Body of pancreas (tissue), 4 donors: ENCODE measurements at regions of chr12 and their contacts with region 1.

Region 1: GRCh38 chr12:2034633-2035430 is 18.0 kb upstream of the CACNA1C start:
- DNase-seq: peak; percentile 87 to 92 (median 88)
- ATAC-seq: peak; percentile 96
- H3K4me3 ChIP-seq: no peak overlapping the region
- H3K27ac ChIP-seq: no peak overlapping the region
- H3K4me1 ChIP-seq: peaks cover 9% of the 10 kb centered on the region
- H3K27me3 ChIP-seq: no peaks in the 10 kb centered on the region
- CTCF ChIP-seq: peak; percentile 71 to 97 (median 94)
- POLR2A ChIP-seq: no peak

Region 2: GRCh38 chr12:1804545-1805332 is 230.1 kb before region 1 on chr12:
- intact Hi-C with region 1: loop called (anchors 10 kb)
- DNase-seq: peak; percentile 69 to 87 (median 74)
- ATAC-seq: peak; percentile 69
- H3K4me3 ChIP-seq: no peak overlapping the region
- H3K27ac ChIP-seq: no peak overlapping the region
- H3K4me1 ChIP-seq: no peaks in the 10 kb centered on the region
- H3K27me3 ChIP-seq: no peaks in the 10 kb centered on the region
- CTCF ChIP-seq: no peak
- POLR2A ChIP-seq: no peak